CD8-positive, alpha-beta memory T cell (primary cell): ENCODE measurements at regions of chr2 and their contacts with region 1.

Region 1: GRCh38 chr2:73985308-73986084 is 786 bp downstream of the TET3 start:
- DNase-seq: peak; percentile 31 to 63 (median 54)
- H3K4me3 ChIP-seq: peak overlapping the region; percentile 58
- H3K4me3 Mint-ChIP-seq: peak overlapping the region; percentile 81 to 96 (median 85)
- H3K27ac ChIP-seq: peak overlapping the region; percentile 57
- H3K27ac Mint-ChIP-seq: peak overlapping the region; percentile 71 to 98 (median 89)
- H3K4me1 ChIP-seq: peaks cover 77% of the 10 kb centered on the region
- H3K4me1 Mint-ChIP-seq: peaks cover 68 to 81% (median 80%) of the 10 kb centered on the region in 3 donors
- H3K27me3 ChIP-seq: no peaks in the 10 kb centered on the region
- H3K27me3 Mint-ChIP-seq: peaks cover 0 to 1% of the 10 kb centered on the region in 2 donors

Region 2: DNA sequence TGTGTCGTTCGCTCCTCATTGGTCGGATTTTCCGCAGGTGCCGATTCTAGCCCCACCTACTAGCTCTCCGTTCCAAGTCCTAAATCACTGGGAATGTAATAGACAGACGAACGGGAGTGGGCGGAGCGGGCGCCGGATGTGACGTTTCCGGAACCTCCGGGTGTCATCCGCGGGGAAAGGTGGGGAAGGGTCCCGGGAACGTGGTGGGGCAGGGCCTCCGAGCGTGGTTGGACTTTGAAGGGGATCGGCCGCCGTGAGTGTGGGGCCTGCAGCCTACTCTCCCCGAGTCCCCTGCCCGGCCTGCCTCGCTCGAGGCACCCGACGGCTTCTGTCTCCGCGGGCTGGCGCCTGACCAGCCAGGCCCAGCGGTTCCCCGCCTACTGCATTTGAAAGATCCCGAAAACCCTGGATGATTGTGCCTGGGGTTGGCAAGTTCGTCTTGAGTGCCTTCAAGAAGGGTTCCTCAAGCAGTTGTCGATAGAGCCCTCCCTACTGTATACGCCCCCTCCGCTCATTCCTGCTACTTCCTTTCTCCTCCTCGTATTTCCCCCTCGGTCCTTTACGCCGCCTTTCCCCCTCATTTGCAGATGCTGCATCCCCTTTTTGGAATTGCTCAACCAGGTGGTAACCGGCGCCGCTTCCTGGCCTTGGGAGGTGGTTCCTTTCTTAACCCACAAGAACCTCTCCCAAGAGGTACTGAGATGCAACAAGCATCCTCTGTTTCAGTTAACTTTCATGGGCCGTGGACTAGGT is 156.5 kb before region 1 on chr2 and contains the start of gene STAMBP:
- CTCF ChIA-PET with region 1: interaction called, 16 read pairs
- POLR2A ChIA-PET with region 1: interaction called, 5 read pairs
- DNase-seq: peak; percentile 86 to 94 (median 90)
- H3K4me3 ChIP-seq: peak within 1 kb of the TSS; percentile 92
- H3K4me3 Mint-ChIP-seq: peak within 1 kb of the TSS; percentile 82 to 98 (median 96)
- H3K27ac ChIP-seq: peak within 1 kb of the TSS; percentile 93
- H3K27ac Mint-ChIP-seq: peak within 1 kb of the TSS; percentile 94 to 100 (median 99)
- H3K4me1 ChIP-seq: peaks cover 32% of the 10 kb centered on the region
- H3K4me1 Mint-ChIP-seq: peaks cover 46 to 61% (median 52%) of the 10 kb centered on the region in 3 donors
- H3K27me3 ChIP-seq: no peaks in the 10 kb centered on the region
- H3K27me3 Mint-ChIP-seq: no peaks in the 10 kb centered on the region
- total RNA-seq, gene STAMBP: 71.7 to 71.9 TPM

Region 3: GRCh38 chr2:73907840-73908452 is 77.5 kb before region 1 on chr2:
- CTCF ChIA-PET with region 1: interaction called, 18 read pairs
- POLR2A ChIA-PET with region 1: no interaction called
- DNase-seq: peak; percentile 16 to 69 (median 35)
- H3K4me3 ChIP-seq: no peak overlapping the region
- H3K4me3 Mint-ChIP-seq: no peak overlapping the region
- H3K27ac ChIP-seq: no peak overlapping the region
- H3K27ac Mint-ChIP-seq: peak overlapping the region in 3 of 8 donors; percentile 43 to 66 (median 63)
- H3K4me1 ChIP-seq: no peaks in the 10 kb centered on the region
- H3K4me1 Mint-ChIP-seq: peaks cover 0 to 3% (median 0%) of the 10 kb centered on the region in 3 donors
- H3K27me3 ChIP-seq: no peaks in the 10 kb centered on the region
- H3K27me3 Mint-ChIP-seq: peaks cover 0 to 2% of the 10 kb centered on the region in 2 donors

Region 4: GRCh38 chr2:73926493-73927338 is 58.8 kb before region 1 on chr2 and contains the start of gene DGUOK:
- CTCF ChIA-PET with region 1: interaction called, 11 read pairs
- POLR2A ChIA-PET with region 1: interaction called, 4 read pairs
- DNase-seq: peak; percentile 92 to 99 (median 97)
- H3K4me3 ChIP-seq: peak within 1 kb of the TSS; percentile 82
- H3K4me3 Mint-ChIP-seq: peak within 1 kb of the TSS; percentile 81 to 96 (median 93)
- H3K27ac ChIP-seq: peak within 1 kb of the TSS; percentile 99
- H3K27ac Mint-ChIP-seq: peak within 1 kb of the TSS; percentile 97 to 99 (median 99)
- H3K4me1 ChIP-seq: peaks cover 46% of the 10 kb centered on the region
- H3K4me1 Mint-ChIP-seq: peaks cover 48 to 57% (median 55%) of the 10 kb centered on the region in 3 donors
- H3K27me3 ChIP-seq: no peaks in the 10 kb centered on the region
- H3K27me3 Mint-ChIP-seq: no peaks in the 10 kb centered on the region
- total RNA-seq, gene DGUOK: 96.6 to 98.8 TPM

Region 5: DNA sequence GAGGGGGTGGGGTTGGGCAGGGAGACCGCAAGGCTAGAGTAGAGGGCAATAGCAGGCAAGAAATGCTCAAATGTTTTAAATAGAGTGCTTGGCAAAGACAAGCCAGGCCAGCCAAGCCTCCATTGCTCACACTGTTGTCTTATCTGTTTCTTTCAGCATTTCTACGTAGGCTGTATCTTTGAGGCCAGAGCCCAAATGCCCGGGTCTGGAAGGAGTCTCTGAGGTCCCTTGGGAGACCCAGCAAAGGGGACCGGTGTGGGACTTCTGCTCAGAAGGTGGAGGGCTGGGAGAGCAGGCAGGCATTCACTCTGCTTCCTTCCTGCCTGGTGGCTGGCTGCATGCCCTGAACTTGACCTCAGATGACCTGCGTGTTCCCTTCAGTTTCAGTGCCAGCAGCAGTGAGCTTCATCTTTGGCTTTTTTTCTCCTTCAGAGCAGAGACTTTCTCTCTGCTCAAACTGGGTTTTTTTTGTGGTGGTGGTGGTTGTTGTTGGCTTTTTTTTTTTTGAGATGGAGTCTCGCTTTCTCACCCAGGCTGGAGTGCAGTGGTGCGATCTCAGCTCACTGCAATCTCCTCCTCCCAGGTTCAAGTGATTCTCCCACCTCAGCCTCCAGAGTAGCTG is 14.5 kb before region 1 on chr2:
- CTCF ChIA-PET with region 1: interaction called, 16 read pairs
- POLR2A ChIA-PET with region 1: interaction called, 5 read pairs
- DNase-seq: peak; percentile 37 to 78 (median 70)
- H3K4me3 ChIP-seq: peak overlapping the region; percentile 10
- H3K4me3 Mint-ChIP-seq: peak overlapping the region; percentile 54 to 80 (median 76)
- H3K27ac ChIP-seq: peak overlapping the region; percentile 13
- H3K27ac Mint-ChIP-seq: peak overlapping the region; percentile 86 to 97 (median 94)
- H3K4me1 ChIP-seq: peaks cover 41% of the 10 kb centered on the region
- H3K4me1 Mint-ChIP-seq: peaks cover 29 to 47% (median 45%) of the 10 kb centered on the region in 3 donors
- H3K27me3 ChIP-seq: no peaks in the 10 kb centered on the region
- H3K27me3 Mint-ChIP-seq: no peaks in the 10 kb centered on the region

Region 6: GRCh38 chr2:74002487-74003391 is 17.2 kb after region 1 on chr2:
- CTCF ChIA-PET with region 1: interaction called, 21 read pairs
- POLR2A ChIA-PET with region 1: interaction called, 4 read pairs
- DNase-seq: peak; percentile 76 to 83 (median 81)
- H3K4me3 ChIP-seq: peak overlapping the region; percentile 64
- H3K4me3 Mint-ChIP-seq: peak overlapping the region; percentile 83 to 93 (median 86)
- H3K27ac ChIP-seq: peak overlapping the region; percentile 21
- H3K27ac Mint-ChIP-seq: peak overlapping the region in 6 of 8 donors; percentile 78 to 97 (median 82)
- H3K4me1 ChIP-seq: peaks cover 35% of the 10 kb centered on the region
- H3K4me1 Mint-ChIP-seq: peaks cover 44 to 62% (median 62%) of the 10 kb centered on the region in 3 donors
- H3K27me3 ChIP-seq: no peaks in the 10 kb centered on the region
- H3K27me3 Mint-ChIP-seq: peaks cover 0 to 3% of the 10 kb centered on the region in 2 donors